Left colon (tissue), 2 donors: ENCODE measurements at regions of chr11 and their contacts with region 1.

Region 1: DNA sequence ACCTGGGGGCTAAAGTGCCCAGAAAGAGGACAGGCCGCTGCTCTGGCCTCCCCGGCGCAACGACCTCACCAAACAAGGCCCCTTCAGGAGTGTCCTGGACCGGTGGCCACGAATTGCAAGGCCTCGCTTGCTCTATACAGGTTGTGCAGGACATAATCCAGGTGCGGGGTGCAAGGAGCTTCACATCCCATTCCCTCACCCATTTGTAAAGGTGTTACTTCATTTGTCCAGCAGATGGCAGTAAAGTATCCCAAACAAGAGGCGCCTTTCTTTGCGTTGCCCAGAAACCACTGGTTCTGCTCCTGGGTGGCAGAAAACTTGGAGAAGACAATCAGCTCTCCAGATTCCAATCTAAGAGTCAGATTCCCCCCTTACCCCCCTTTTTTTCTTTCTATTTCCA is 35.9 kb upstream of the PRDM11 start:
- DNase-seq: no peak
- ATAC-seq: peak; percentile 74

Region 2: GRCh38 chr11:44927174-44927661 is 183.3 kb before region 1 on chr11:
- intact Hi-C with region 1: no loop called
- DNase-seq: peak; percentile 53 to 76
- ATAC-seq: peak; percentile 65

Region 3: DNA sequence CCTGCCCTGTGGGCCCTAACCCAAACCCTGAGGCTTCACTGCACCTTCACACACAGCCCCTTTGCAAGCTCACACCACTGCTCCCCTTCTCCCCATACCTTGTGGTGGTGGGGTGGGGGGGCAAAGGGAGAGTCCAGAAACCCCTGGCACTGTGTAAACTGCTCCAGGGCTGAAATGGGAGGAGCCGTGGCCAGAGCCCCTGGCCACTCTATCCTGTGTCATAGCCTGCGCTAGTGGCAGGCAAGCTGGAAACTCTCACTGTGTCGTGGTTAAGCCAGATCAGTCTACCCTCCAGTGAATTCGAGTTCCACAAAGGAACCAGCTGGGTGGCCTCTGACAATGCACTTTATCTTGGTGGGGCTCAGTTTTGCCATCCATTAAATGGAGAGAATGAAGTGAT is 183.9 kb after region 1 on chr11:
- intact Hi-C with region 1: loop called in 1 of 2 experiments (anchors 5 kb)
- DNase-seq: no peak
- ATAC-seq: no peak

Region 4: DNA sequence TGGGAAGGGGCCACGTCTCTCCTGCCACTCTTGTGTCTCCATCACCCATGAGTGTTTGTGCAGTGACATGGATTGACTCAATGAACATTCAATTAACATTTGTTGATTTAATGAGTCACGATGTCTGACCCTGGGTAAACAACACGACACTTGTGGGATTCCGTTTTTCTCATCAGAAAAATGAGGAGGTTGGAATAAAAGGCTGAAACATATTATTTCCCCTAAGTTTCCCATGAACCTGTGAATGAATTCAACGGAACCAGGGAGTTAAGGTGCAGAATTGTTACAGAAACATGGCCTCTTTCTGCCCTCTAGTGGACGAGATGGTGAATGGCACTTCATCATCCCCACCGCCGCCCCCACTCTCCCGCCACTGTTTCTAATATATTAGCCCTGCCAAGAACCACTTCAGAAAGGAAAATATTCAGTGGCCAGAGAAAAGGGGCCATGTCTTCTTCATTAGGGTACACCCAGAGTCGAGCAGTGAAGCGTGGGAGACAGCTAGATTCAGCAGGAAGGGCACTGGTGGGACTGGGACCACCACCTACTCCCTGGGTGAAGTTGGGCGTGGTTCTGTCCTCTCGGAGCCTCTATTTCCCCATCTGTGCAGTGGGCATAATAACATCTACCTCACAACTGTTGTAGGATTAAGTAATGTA is 221.8 kb after region 1 on chr11:
- intact Hi-C with region 1: loop called in 1 of 2 experiments (anchors 2 kb)
- DNase-seq: peak in 1 of 2 donors; percentile 41
- ATAC-seq: peak; percentile 73